WTC11 (cell line): ENCODE measurements at regions of chr17 and their contacts with region 1.

Region 1: DNA sequence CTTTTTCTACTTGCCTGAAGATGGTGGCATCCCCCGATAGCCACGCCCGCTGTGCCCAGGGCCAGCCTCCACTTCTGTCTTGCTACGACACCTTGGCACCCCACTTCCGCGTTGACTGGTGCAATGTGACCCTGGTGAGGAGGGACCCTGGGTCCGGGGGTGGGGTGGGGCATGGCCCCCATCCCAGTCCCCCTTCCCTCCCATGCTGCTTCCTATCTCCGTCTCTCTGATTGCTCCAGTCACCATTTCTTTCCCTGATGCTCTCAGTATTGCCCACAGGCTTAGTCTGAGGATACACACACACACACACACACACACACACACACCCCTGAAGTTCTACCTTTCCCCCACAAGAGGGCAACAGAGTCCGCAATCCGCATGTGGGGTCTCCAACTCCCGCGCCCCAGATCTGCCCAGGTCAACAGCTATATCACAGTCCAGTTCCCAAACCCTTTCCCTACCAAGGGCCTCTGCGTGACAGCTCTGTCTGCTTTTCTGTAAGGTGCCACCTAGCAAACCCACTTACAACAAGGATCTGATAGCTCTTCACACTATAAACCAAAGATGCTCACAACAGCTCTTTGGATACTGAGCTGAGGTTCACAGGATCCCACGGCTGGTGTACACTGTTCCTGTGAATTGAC is 3.4 kb downstream of the SGCA start:
- DNase-seq: peak; percentile 71
- ATAC-seq: peak; percentile 74
- H3K4me3 Mint-ChIP-seq: no peak overlapping the region
- H3K27ac Mint-ChIP-seq: no peak overlapping the region
- H3K4me1 Mint-ChIP-seq: peaks cover 13% of the 10 kb centered on the region
- H3K27me3 Mint-ChIP-seq: no peaks in the 10 kb centered on the region
- CTCF ChIP-seq: peak; percentile 44

Region 2: GRCh38 chr17:50114849-50115357 is 54.3 kb before region 1 on chr17:
- CTCF ChIA-PET with region 1: interaction called, 14 read pairs
- POLR2A ChIA-PET with region 1: no interaction called
- DNase-seq: peak; percentile 55
- ATAC-seq: peak; percentile 55
- H3K4me3 Mint-ChIP-seq: peak overlapping the region; percentile 1; the same call in 1 of the 2 replicates
- H3K27ac Mint-ChIP-seq: no peak overlapping the region
- H3K4me1 Mint-ChIP-seq: peaks cover 21% of the 10 kb centered on the region
- H3K27me3 Mint-ChIP-seq: peaks cover 44% of the 10 kb centered on the region
- CTCF ChIP-seq: peak; percentile 40; the same call in 1 of the 2 replicates

Region 3: GRCh38 chr17:50151041-50151936 is 18.0 kb before region 1 on chr17:
- CTCF ChIA-PET with region 1: interaction called, 16 read pairs
- POLR2A ChIA-PET with region 1: no interaction called
- DNase-seq: peak; percentile 92
- ATAC-seq: peak; percentile 58
- H3K4me3 Mint-ChIP-seq: peak overlapping the region; percentile 75
- H3K27ac Mint-ChIP-seq: peak overlapping the region; percentile 95
- H3K4me1 Mint-ChIP-seq: peaks cover 38% of the 10 kb centered on the region
- H3K27me3 Mint-ChIP-seq: peaks cover 19% of the 10 kb centered on the region
- CTCF ChIP-seq: no peak

Region 4: DNA sequence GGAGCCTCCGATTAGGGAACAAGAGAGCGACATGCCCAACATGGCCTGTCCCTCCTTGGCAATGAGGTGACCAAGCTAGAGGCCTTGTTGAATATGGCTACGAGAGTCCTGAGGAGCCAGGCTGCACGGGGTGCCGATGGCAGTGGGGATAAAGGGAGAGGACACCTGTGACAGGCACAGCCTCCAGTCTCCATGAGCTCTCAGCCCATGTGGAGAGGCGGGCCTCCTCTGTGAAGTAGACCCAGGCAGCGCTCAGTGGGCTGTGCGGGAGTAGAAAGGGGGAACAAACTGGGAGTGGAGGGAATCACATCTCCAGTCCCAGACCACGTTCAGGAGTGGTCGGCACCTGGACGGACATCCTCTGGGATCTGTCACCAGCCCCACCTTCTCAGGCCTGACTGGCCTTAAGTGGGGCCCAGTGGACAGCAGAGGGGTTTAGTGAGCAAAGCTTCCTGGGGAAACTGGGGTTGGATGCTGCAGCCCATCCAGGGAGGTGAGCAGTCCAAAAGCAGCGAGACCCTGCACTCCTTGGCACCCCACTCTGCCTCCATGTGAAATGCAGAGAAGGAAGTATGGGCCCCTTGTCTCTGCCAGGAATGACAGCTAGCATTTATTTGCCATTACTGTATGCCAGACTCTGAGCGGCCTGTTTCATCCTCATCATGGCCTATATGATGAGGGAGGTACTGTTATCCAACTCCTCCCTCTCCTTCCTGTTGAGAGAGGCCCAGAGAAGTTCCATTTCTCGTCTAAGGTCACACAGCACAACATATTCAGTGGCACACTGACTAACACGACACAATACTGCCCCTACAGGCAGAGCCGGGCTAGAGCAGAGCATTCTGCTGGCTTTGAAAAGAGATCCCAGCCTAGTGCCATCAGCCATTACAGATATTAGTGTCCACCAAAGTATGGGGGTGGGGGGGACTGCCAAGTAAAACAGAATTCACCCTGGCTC is 100.5 kb after region 1 on chr17:
- CTCF ChIA-PET with region 1: interaction called, 46 read pairs
- POLR2A ChIA-PET with region 1: interaction called, 3 read pairs
- DNase-seq: peak; percentile 81
- ATAC-seq: peak; percentile 54
- H3K4me3 Mint-ChIP-seq: no peak overlapping the region
- H3K27ac Mint-ChIP-seq: no peak overlapping the region
- H3K4me1 Mint-ChIP-seq: peaks cover 38% of the 10 kb centered on the region
- H3K27me3 Mint-ChIP-seq: peaks cover 12% of the 10 kb centered on the region
- CTCF ChIP-seq: peak; percentile 61

Region 5: GRCh38 chr17:50331085-50331791 is 162.0 kb after region 1 on chr17:
- CTCF ChIA-PET with region 1: interaction called, 17 read pairs
- POLR2A ChIA-PET with region 1: no interaction called
- DNase-seq: no peak
- ATAC-seq: no peak
- H3K4me3 Mint-ChIP-seq: no peak overlapping the region
- H3K27ac Mint-ChIP-seq: no peak overlapping the region
- H3K4me1 Mint-ChIP-seq: peaks cover 17% of the 10 kb centered on the region
- H3K27me3 Mint-ChIP-seq: no peaks in the 10 kb centered on the region
- CTCF ChIP-seq: no peak